Activated CD4-positive, alpha-beta T cell treated with anti-CD3 and anti-CD28 coated beads for 36 hours (primary cell): ENCODE measurements at regions of chr2 and their contacts with region 1.

Region 1: GRCh38 chr2:177724398-177725287 is 332.1 kb downstream of the AGPS start:
- DNase-seq: peak; percentile 72
- ATAC-seq: peak; percentile 64
- H3K4me3 Mint-ChIP-seq: no peak overlapping the region
- H3K27ac Mint-ChIP-seq: no peak overlapping the region
- H3K4me1 Mint-ChIP-seq: peaks cover 2% of the 10 kb centered on the region
- H3K27me3 Mint-ChIP-seq: peaks cover 16% of the 10 kb centered on the region

Region 2: GRCh38 chr2:177489719-177490301 is 234.8 kb before region 1 on chr2:
- CTCF ChIA-PET with region 1: interaction called, 3 read pairs
- POLR2A ChIA-PET with region 1: no interaction called
- intact Hi-C with region 1: loop called in 1 of 2 experiments (anchors 5 kb)
- DNase-seq: no peak
- ATAC-seq: no peak
- H3K4me3 Mint-ChIP-seq: no peak overlapping the region
- H3K27ac Mint-ChIP-seq: no peak overlapping the region
- H3K4me1 Mint-ChIP-seq: no peaks in the 10 kb centered on the region
- H3K27me3 Mint-ChIP-seq: no peaks in the 10 kb centered on the region

Region 3: GRCh38 chr2:177735318-177735803 is 10.7 kb after region 1 on chr2:
- CTCF ChIA-PET with region 1: interaction called, 14 read pairs
- POLR2A ChIA-PET with region 1: no interaction called
- intact Hi-C with region 1: no loop called
- DNase-seq: no peak
- ATAC-seq: no peak
- H3K4me3 Mint-ChIP-seq: no peak overlapping the region
- H3K27ac Mint-ChIP-seq: no peak overlapping the region
- H3K4me1 Mint-ChIP-seq: no peaks in the 10 kb centered on the region
- H3K27me3 Mint-ChIP-seq: peaks cover 12% of the 10 kb centered on the region